PC-3 (cell line): ENCODE measurements at regions of chr1 and their contacts with region 1.

Region 1: GRCh38 chr1:231337472-231338269 is at the start of gene EXOC8:
- DNase-seq: peak; percentile 100
- ATAC-seq: peak; percentile 72
- H3K4me3 ChIP-seq: peak within 1 kb of the TSS; percentile 95
- H3K27ac ChIP-seq: peak within 1 kb of the TSS; percentile 94
- H3K4me1 ChIP-seq: peaks cover 14% of the 10 kb centered on the region
- H3K27me3 ChIP-seq: no peaks in the 10 kb centered on the region
- CTCF ChIP-seq: no peak
- total RNA-seq, gene EXOC8: 14.0 and 14.9 TPM in 2 replicates

Region 2: DNA sequence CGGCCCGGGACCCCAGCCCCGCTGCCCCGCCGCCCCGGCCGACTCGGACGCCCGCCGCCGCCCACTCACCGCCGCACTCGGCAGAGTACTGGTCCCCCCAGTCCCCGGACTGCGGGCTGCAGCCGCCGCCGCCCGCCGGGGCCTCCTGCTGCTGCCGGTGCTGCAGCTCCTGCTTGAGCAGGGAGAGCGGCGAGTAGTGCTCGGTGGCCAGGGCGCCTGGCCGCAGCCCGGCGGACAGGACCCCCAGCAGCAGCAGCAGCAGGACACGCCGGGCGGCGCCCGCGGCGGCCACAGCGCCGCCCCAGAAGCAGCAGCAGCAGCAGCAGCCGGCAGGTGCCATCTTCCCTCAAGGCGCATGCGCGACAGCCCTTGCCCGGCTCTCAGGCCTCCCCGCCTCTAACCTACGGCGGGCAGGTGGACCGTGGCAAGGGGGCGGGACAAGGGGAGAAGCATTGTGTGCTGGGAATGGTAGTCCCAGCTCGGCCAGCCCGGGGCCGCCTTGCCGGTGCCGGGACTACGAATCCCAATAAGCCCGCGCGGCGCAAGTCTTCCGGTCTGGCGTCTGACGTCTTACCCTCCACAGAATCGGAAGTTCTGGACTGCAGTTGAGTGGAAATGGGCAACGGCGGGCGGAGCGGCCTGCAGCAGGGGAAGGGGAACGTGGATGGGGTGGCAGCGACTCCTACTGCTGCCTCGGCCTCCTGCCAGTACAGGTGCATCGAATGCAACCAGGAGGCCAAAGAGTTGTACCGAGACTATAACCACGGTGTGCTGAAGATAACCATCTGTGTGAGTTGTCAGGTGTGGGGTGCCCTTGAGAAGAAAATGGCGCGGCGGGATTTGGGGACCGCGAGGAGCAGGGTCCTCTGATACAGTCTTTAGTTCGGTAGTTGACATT is 358.9 kb before region 1 on chr1 and contains the starts of genes ARV1 and TTC13:
- CTCF ChIA-PET with region 1: no interaction called
- POLR2A ChIA-PET with region 1: no interaction called
- intact Hi-C with region 1: loop called (anchors 10 kb)
- DNase-seq: peak; percentile 99
- ATAC-seq: peak; percentile 99
- H3K4me3 ChIP-seq: peak within 1 kb of the TSS; percentile 91
- H3K27ac ChIP-seq: no peak within 1 kb of the TSS
- H3K4me1 ChIP-seq: peaks cover 17% of the 10 kb centered on the region
- H3K27me3 ChIP-seq: no peaks in the 10 kb centered on the region
- CTCF ChIP-seq: peak; percentile 60
- total RNA-seq, gene ARV1: 29.4 and 30.6 TPM in 2 replicates
- total RNA-seq, gene TTC13: 17.0 and 20.2 TPM in 2 replicates

Region 3: GRCh38 chr1:231240883-231241735 is 96.6 kb before region 1 on chr1 and contains the start of gene GNPAT:
- CTCF ChIA-PET with region 1: no interaction called
- POLR2A ChIA-PET with region 1: interaction called, 4 read pairs
- intact Hi-C with region 1: loop called (anchors 2 kb)
- DNase-seq: peak; percentile 89
- ATAC-seq: peak; percentile 94
- H3K4me3 ChIP-seq: peak within 1 kb of the TSS; percentile 85
- H3K27ac ChIP-seq: peak within 1 kb of the TSS; percentile 43
- H3K4me1 ChIP-seq: peaks cover 25% of the 10 kb centered on the region
- H3K27me3 ChIP-seq: no peaks in the 10 kb centered on the region
- CTCF ChIP-seq: no peak
- total RNA-seq, gene GNPAT: 40.5 and 45.8 TPM in 2 replicates

Region 4: GRCh38 chr1:231272880-231273279 is 64.8 kb before region 1 on chr1:
- CTCF ChIA-PET with region 1: no interaction called
- POLR2A ChIA-PET with region 1: no interaction called
- intact Hi-C with region 1: no loop called
- DNase-seq: no peak
- ATAC-seq: no peak
- H3K4me3 ChIP-seq: no peak overlapping the region
- H3K27ac ChIP-seq: no peak overlapping the region
- H3K4me1 ChIP-seq: no peaks in the 10 kb centered on the region
- H3K27me3 ChIP-seq: no peaks in the 10 kb centered on the region
- CTCF ChIP-seq: no peak